Lower lobe of right lung (tissue), 2 donors: ENCODE measurements at regions of chr10 and their contacts with region 1.

Region 1: GRCh38 chr10:60646966-60647796 is 131.1 kb upstream of the CDK1 start:
- DNase-seq: no peak
- ATAC-seq: peak; percentile 44 to 70
- H3K4me3 ChIP-seq: no peak overlapping the region
- H3K27ac ChIP-seq: no peak overlapping the region
- H3K4me1 ChIP-seq: peaks cover 2% of the 10 kb centered on the region
- H3K27me3 ChIP-seq: no peaks in the 10 kb centered on the region
- CTCF ChIP-seq: peak; percentile 76

Region 2: DNA sequence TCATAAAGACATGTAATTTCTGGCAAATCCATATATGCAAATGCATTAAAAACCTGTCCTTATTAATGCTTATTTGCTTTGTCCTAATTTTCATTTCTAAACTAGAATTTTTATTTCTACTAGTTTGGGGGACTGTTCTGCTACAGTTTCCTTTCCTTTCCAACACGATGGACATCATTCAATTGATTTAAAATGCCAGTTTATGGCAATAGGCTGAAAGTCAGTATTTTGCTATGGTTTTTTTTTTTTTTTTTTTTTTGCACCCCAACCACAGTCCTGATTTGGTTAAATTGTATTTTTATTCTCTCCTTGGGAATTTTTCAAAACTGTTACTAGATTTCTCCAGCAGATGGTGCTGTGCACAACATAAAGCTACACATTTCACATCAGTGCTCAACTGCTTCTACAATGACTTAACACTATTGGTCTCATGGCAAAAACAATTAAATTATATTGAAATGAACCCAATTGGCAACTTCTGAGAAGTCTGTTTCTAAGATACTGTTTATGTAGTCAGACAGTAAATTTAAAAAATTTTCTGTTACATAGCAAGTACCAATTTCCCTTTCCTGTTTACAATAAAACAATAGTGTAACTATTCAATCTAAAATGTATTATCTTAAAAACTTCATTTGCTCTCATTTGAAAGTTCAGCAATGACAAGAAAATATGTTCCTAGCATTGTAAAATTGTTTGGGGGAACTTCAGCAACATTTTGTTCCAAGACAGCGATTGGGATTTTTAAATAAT is 547.0 kb before region 1 on chr10:
- intact Hi-C with region 1: loop called (anchors 10 kb)
- DNase-seq: no peak
- ATAC-seq: peak; percentile 65 to 69
- H3K4me3 ChIP-seq: no peak overlapping the region
- H3K27ac ChIP-seq: no peak overlapping the region
- H3K4me1 ChIP-seq: no peaks in the 10 kb centered on the region
- H3K27me3 ChIP-seq: no peaks in the 10 kb centered on the region
- CTCF ChIP-seq: peak; percentile 64

Region 3: GRCh38 chr10:60358282-60358681 is 288.9 kb before region 1 on chr10:
- intact Hi-C with region 1: no loop called
- DNase-seq: no peak
- ATAC-seq: no peak
- H3K4me3 ChIP-seq: no peak overlapping the region
- H3K27ac ChIP-seq: no peak overlapping the region
- H3K4me1 ChIP-seq: no peaks in the 10 kb centered on the region
- H3K27me3 ChIP-seq: no peaks in the 10 kb centered on the region
- CTCF ChIP-seq: no peak